ENCODE measurements at regions of chr10 and their contacts with region 1.

Region 1: DNA sequence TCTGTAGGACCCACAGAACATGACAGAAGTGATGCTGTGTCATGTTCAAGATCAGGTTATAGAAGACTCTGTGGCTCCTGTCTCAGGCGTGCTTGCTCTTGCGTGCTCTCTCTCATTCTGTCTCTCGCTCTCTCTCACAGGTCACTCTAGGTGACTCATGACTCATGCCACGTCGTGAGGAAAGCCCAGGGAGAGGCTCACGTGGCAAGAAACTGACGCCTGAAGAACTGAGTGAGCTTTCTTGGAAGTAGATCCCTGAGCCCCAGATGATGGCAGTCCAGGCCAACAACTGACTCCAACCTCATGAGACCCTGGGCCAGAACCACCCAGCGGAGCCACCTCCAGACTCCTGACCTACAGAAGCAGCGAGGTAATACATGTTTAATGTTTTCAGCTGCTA is 103.3 kb downstream of the DNMBP start:
- DNase-seq: peak; percentile 67
- H3K4me3 ChIP-seq: no peak overlapping the region
- H3K27ac ChIP-seq: peak overlapping the region; percentile 66
- H3K4me1 ChIP-seq: peaks cover 21% of the 10 kb centered on the region
- H3K27me3 ChIP-seq: no peaks in the 10 kb centered on the region
- CTCF ChIP-seq: peak; percentile 8 to 36
- POLR2A ChIP-seq: no peak

Region 2: GRCh38 chr10:97981816-97982215 is 1924.7 kb before region 1 on chr10:
- CTCF ChIA-PET with region 1: no interaction called
- POLR2A ChIA-PET with region 1: no interaction called
- dilution Hi-C with region 1: no loop called
- intact Hi-C with region 1: no loop called
- DNase-seq: no peak
- H3K4me3 ChIP-seq: no peak overlapping the region
- H3K27ac ChIP-seq: no peak overlapping the region
- H3K4me1 ChIP-seq: no peaks in the 10 kb centered on the region
- H3K27me3 ChIP-seq: no peaks in the 10 kb centered on the region
- CTCF ChIP-seq: no peak
- POLR2A ChIP-seq: no peak

Region 3: DNA sequence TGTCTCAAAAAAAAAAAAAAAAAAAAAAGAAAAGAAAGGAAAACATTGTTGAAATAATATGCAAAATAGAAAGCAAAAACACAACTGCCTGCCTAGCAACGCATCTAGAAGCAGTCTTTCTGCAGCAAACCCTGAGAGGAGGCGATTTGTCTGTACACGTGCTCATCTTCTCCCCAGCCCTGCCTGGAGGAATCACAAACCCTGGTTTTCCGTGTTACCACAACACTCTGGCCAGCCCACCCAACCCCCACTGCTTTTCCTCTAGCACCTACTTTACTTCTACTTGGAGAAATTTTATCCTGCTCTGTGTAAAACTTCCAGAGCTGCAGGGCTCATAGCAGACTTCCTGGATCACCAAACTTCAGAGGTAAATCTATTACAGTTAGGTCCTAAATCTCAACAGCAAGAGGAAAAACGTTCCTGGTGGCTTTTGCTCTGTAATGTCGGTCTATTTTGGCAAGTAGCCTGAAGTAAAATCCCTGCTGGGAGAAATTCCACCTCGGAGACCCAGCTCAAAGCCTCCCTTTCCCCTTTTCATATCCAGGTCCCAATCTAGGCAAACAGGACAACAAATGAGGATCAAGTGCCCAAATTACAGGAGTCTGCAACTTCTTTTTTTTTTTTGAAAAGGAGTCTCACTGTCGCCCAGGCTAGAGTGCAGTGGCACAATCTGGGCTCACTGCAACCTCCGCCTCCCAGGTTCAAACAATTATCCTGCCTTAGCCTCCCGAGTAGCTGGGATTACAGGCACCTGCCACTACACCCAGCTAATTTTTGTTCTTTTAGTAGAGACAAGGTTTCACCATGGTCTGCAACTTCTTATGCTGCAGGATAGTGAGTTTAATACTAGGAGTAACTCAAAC is 11.7 kb after region 1 on chr10:
- CTCF ChIA-PET with region 1: interaction called, 9 read pairs
- POLR2A ChIA-PET with region 1: no interaction called
- dilution Hi-C with region 1: no loop called
- intact Hi-C with region 1: loop called (anchors 1 kb)
- DNase-seq: peak; percentile 90
- H3K4me3 ChIP-seq: peak overlapping the region in 1 of 3 experiments; percentile 10
- H3K27ac ChIP-seq: peak overlapping the region; percentile 67
- H3K4me1 ChIP-seq: peaks cover 66% of the 10 kb centered on the region
- H3K27me3 ChIP-seq: no peaks in the 10 kb centered on the region
- CTCF ChIP-seq: no peak
- POLR2A ChIP-seq: no peak

Region 4: DNA sequence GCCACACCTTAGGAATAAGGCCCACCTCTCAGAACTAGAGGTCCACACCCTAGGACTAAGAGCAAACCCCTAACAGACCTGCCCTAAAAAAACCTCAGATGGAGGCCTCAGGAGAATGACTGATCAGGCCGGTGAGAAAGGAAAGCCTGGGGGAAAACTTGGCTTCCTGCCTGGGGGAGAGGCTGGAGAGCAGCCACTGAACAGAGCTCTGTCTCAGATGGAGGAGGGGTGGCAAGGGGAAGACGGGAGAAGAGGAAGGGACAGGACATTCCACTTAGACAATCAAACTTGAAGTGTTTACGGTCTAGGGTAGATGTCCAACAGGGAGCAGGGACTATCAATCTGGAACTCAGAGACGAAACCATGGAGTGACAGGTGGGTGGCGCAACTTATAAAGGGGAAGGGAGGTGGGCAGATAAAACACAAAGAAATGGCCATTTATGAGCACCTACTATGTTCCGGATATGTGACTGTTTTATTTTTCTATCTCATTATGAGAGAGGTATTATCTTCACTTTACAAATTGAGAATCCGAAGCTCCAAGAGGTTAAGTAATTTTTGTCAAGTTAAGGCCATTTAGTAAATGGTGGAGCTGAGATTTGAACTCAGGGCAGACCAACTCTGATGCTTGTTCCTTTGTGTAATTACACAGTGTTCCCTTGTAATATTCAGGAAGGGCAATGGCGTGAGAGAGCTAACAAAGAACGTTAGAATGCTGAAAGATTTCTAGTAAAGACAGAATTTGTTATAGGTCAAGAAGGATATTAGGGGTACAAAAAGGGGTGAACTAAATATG is 20.7 kb after region 1 on chr10:
- CTCF ChIA-PET with region 1: interaction called, 10 read pairs
- POLR2A ChIA-PET with region 1: interaction called, 5 read pairs
- dilution Hi-C with region 1: no loop called
- intact Hi-C with region 1: loop called (anchors 2 kb)
- DNase-seq: peak; percentile 91
- H3K4me3 ChIP-seq: peak overlapping the region; percentile 40 to 64 (median 40)
- H3K27ac ChIP-seq: peak overlapping the region; percentile 73
- H3K4me1 ChIP-seq: peaks cover 77% of the 10 kb centered on the region
- H3K27me3 ChIP-seq: no peaks in the 10 kb centered on the region
- CTCF ChIP-seq: no peak
- POLR2A ChIP-seq: peak; percentile 78

Region 5: DNA sequence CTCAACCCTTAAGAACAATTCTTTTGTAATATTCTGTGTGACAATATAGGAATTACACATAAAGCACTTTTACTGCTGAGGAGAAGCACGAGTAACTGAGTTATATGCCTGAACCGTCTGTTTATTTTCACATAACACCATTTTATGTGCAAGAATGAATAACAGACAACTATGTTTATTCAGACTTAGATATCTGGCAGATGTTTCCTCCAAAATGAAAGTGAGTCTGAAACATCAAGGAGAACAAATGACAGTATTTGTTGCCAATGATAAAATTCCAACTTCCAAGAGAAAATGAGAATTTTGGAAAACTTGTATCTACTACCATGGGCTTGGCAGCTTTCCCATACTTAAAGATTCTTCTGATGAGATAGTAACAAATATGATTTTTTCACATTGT is 51.8 kb after region 1 on chr10:
- CTCF ChIA-PET with region 1: interaction called, 17 read pairs
- POLR2A ChIA-PET with region 1: no interaction called
- dilution Hi-C with region 1: no loop called
- intact Hi-C with region 1: no loop called
- DNase-seq: peak; percentile 95
- H3K4me3 ChIP-seq: peak overlapping the region in 1 of 3 experiments; percentile 19
- H3K27ac ChIP-seq: peak overlapping the region; percentile 50
- H3K4me1 ChIP-seq: peaks cover 31% of the 10 kb centered on the region
- H3K27me3 ChIP-seq: no peaks in the 10 kb centered on the region
- CTCF ChIP-seq: no peak
- POLR2A ChIP-seq: peak; percentile 73

Measured in endothelial cell of umbilical vein (primary cell).